ENCODE measurements at regions of chr20 and their contacts with region 1.

Region 1: GRCh38 chr20:5580936-5581708 is 169.1 kb upstream of the SHLD1 start:
- DNase-seq: no peak
- H3K4me3 ChIP-seq: no peak overlapping the region
- H3K4me3 Mint-ChIP-seq: no peak overlapping the region
- H3K27ac Mint-ChIP-seq: no peak overlapping the region
- H3K4me1 ChIP-seq: peaks cover 7% of the 10 kb centered on the region; the same call in 1 of the 2 replicates
- H3K4me1 Mint-ChIP-seq: no peaks in the 10 kb centered on the region
- H3K27me3 ChIP-seq: no peaks in the 10 kb centered on the region
- H3K27me3 Mint-ChIP-seq: no peaks in the 10 kb centered on the region
- CTCF ChIP-seq: no peak

Region 2: GRCh38 chr20:5729348-5729747 is 148.2 kb after region 1 on chr20:
- CTCF ChIA-PET with region 1: interaction called, 10 read pairs
- POLR2A ChIA-PET with region 1: no interaction called
- intact Hi-C with region 1: no loop called
- DNase-seq: no peak
- H3K4me3 ChIP-seq: no peak overlapping the region
- H3K4me3 Mint-ChIP-seq: no peak overlapping the region
- H3K27ac Mint-ChIP-seq: no peak overlapping the region
- H3K4me1 ChIP-seq: peaks cover under 1% of the 10 kb centered on the region; the same call in 1 of the 2 replicates
- H3K4me1 Mint-ChIP-seq: no peaks in the 10 kb centered on the region
- H3K27me3 ChIP-seq: no peaks in the 10 kb centered on the region
- H3K27me3 Mint-ChIP-seq: no peaks in the 10 kb centered on the region
- CTCF ChIP-seq: no peak